ENCODE measurements at regions of chr11 and their contacts with region 1.

Region 1: DNA sequence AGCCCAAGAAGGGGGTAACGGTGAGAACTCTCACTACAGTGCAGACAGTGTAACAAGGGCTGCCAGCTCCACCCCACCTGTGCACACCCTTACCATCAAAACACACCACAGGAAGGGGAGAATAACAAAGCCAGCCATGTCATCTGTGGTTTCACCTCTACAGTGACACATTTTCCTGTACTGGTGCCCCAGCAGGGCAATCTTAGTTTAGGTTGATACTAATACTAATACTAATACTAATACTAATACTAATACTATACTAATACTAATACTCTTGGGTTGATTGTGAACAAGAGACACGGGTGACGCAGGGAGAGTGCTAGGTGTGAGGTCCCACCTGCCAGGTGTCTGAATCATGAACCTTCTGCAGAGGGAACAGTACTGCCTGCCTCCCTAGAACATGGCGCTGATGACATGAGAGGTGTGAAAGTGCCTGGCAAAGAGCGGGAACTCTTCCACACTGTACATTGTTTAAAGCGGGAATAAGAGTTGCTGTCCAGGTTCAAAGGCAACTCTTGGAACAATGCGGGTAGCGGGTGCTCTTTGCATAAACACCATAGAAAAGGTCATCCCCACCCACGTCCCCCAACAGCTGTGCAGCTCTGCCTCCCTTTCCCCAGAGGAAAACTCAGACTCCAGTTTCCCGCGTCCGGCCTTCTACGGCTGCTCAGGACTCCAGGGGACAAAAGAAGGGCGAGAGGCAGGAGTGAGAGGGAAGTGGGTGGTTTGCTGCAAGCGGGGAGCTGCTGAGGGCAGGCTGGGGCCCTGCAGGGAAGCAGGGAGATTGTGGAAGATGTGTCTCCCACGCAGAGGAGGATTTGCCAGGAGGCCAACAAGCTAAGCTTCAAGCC is 25.0 kb upstream of the TMPRSS4 start:
- DNase-seq: peak; percentile 84
- H3K4me3 Mint-ChIP-seq: no peak overlapping the region
- H3K27ac Mint-ChIP-seq: peak overlapping the region; percentile 61
- H3K4me1 Mint-ChIP-seq: peaks cover 52% of the 10 kb centered on the region
- H3K27me3 Mint-ChIP-seq: no peaks in the 10 kb centered on the region

Region 2: GRCh38 chr11:117817368-117818040 is 234.3 kb before region 1 on chr11:
- CTCF ChIA-PET with region 1: interaction called, 32 read pairs
- intact Hi-C with region 1: no loop called
- DNase-seq: peak; percentile 98
- H3K4me3 Mint-ChIP-seq: peak overlapping the region; percentile 56
- H3K27ac Mint-ChIP-seq: peak overlapping the region; percentile 95
- H3K4me1 Mint-ChIP-seq: peaks cover 65% of the 10 kb centered on the region
- H3K27me3 Mint-ChIP-seq: no peaks in the 10 kb centered on the region

Region 3: DNA sequence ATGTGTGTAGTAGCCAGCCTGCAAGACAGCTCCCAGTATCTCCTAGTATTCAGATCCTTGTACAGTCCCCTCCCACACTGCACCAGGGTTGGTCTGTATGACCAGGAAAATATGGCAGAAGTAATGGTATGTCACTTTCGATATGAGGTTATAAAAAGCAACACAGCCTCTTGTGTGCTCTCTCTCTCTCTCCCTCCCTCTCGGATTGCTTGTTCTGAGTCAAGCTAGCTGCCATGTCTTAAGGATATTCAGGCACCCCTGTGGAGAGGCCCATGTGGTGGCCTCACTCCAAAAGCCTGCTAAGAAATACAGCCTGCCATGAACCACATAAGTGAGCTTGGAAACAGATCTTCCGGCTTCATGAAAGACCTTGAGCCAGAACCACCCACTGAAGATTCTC is 200.7 kb before region 1 on chr11:
- CTCF ChIA-PET with region 1: interaction called, 108 read pairs
- intact Hi-C with region 1: no loop called
- DNase-seq: no peak
- H3K4me3 Mint-ChIP-seq: no peak overlapping the region
- H3K27ac Mint-ChIP-seq: no peak overlapping the region
- H3K4me1 Mint-ChIP-seq: peaks cover 1% of the 10 kb centered on the region
- H3K27me3 Mint-ChIP-seq: peaks cover 6% of the 10 kb centered on the region

Region 4: DNA sequence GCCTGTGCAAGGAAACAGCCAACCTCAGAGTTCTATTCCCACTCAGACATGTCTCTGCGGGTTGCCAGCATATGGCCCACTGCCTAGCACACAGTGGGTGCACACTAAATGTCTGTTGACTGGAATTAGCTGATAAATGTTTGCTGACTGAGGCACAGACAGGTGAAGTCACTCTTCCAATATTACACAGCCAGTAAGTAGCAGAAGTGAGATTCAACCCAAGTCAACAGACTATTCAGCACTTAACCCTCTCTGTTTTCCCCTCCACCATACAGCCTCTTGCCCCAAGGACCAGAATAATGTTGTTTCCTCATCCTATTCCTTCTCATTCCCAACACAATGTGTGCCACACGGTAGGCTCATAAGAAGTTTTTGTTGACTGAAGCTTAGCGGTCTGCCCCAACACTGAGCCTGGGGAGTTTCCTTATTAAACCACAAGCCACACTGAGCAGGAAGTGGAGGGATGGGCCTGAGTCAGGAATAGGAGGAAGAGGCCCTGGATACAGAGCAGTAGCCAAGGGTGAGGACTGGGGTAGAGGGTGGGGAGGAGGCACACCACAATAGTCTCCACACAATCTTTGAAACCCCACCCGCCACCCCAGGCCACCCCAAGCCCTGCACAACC is 81.3 kb before region 1 on chr11:
- CTCF ChIA-PET with region 1: interaction called, 10 read pairs
- intact Hi-C with region 1: no loop called
- DNase-seq: peak; percentile 71
- H3K4me3 Mint-ChIP-seq: peak overlapping the region; percentile 2
- H3K27ac Mint-ChIP-seq: peak overlapping the region; percentile 48
- H3K4me1 Mint-ChIP-seq: peaks cover 56% of the 10 kb centered on the region
- H3K27me3 Mint-ChIP-seq: no peaks in the 10 kb centered on the region

Region 5: DNA sequence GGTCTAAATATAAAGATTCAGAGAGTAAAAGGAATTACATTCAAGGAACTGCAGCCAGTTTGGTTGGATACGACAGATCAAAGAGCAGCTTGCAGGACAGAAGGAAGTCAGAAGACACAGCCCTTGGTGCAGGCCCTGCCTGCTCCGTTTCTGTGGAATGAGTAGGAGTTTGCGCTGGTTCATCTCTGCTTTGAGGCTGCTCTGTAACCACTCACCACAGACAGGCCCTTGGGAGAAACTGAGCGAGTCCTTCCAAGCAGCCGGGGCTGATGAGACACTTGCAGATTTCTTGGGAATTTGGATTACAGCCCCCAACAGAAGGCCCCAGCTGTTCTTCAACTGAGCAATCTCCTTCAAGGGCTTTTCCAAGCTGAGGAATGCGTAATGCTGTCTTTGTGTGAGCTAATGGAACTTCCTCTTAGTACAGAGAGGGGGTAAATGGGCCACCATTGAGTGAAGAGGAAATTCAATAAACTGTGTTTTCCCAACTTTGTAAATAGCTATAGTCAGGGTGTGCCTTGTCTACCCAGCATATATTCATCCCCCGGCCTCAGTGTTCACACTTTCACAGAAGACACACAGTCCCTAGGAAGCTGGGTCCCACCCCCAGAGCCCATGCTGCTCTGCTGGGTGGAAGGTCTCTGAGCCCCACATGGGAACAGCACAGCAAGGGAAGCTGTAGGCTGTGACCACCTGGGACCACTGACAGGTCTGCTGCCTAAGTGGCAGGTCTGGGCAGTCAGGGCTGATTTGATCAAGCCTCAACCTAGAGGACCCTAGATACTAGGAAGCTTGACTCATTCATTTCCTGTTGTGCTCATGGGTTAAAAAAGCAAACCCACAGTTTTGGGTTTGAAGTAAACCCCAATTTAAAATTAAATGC is 49.1 kb before region 1 on chr11:
- CTCF ChIA-PET with region 1: interaction called, 25 read pairs
- intact Hi-C with region 1: loop called (anchors 1 kb)
- DNase-seq: peak; percentile 73
- H3K4me3 Mint-ChIP-seq: no peak overlapping the region
- H3K27ac Mint-ChIP-seq: peak overlapping the region; percentile 80
- H3K4me1 Mint-ChIP-seq: peaks cover 68% of the 10 kb centered on the region
- H3K27me3 Mint-ChIP-seq: no peaks in the 10 kb centered on the region

Region 6: GRCh38 chr11:118164885-118165284 is 113.0 kb after region 1 on chr11:
- CTCF ChIA-PET with region 1: no interaction called
- intact Hi-C with region 1: no loop called
- DNase-seq: no peak
- H3K4me3 Mint-ChIP-seq: no peak overlapping the region
- H3K27ac Mint-ChIP-seq: no peak overlapping the region
- H3K4me1 Mint-ChIP-seq: no peaks in the 10 kb centered on the region
- H3K27me3 Mint-ChIP-seq: peaks cover 2% of the 10 kb centered on the region

Measured in activated naive CD4-positive, alpha-beta T cell treated with anti-CD3 and anti-CD28 coated beads for 36 hours (primary cell).